Activated naive CD4-positive, alpha-beta T cell treated with anti-CD3 and anti-CD28 coated beads for 36 hours (primary cell): ENCODE measurements at regions of chr4 and their contacts with region 1.

Region 1: GRCh38 chr4:113384600-113384999 is 335.1 kb downstream of the ANK2 start:
- DNase-seq: peak; percentile 18
- H3K4me3 Mint-ChIP-seq: no peak overlapping the region
- H3K27ac Mint-ChIP-seq: peak overlapping the region; percentile 64
- H3K4me1 Mint-ChIP-seq: peaks cover 32% of the 10 kb centered on the region
- H3K27me3 Mint-ChIP-seq: peaks cover 10% of the 10 kb centered on the region

Region 2: DNA sequence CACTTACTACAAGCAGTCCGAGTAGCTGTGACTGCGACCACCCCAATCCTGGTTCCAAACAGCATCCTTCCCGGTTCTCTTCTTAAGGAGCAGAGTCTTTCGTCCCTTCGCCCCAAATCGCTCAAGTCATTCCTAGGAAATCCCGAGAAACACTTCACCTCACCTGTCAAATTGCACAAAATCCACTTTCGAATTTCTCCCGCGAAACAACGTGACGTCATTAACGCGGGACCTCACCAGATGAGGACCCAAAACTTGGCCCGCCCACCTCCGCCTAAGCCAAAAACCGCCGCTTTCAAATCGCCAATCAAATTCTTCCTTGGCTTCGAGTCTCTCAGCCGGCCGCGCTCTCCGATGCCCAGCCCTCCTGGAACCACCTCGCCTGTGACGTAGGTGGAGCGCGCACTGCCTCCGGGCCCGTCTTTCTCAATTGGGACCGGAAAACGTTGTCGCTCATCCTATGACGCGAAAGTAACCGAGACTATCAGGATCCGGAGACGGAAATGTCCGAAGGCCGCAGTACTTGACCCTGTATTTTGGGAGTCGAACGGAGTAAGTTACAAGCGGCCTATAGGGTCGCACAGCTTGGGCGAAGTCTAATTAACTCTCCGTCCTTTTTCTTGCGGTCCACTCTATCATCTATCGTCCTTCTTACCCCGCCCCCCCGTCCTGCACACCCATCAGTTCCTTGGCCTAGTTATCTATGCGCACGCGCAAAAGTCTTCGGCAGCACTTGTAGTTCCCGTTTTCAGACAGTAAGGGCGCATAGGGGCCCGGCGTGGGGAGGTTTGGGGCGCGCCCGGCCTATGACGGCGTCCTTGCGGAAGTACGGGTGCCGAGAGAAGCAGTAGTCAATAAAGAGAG is 747.7 kb before region 1 on chr4 and contains the starts of genes LARP7 and ZGRF1:
- CTCF ChIA-PET with region 1: no interaction called
- intact Hi-C with region 1: loop called (anchors 1 kb)
- DNase-seq: peak; percentile 99
- H3K4me3 Mint-ChIP-seq: no peak within 1 kb of the TSS
- H3K27ac Mint-ChIP-seq: peak within 1 kb of the TSS; percentile 16
- H3K4me1 Mint-ChIP-seq: peaks cover 27% of the 10 kb centered on the region
- H3K27me3 Mint-ChIP-seq: no peaks in the 10 kb centered on the region
- total RNA-seq, gene LARP7: 41.5 to 41.9 TPM
- total RNA-seq, gene ZGRF1: 40.0 to 43.0 TPM

Region 3: GRCh38 chr4:113355550-113356371 is 28.8 kb before region 1 on chr4:
- CTCF ChIA-PET with region 1: interaction called, 4 read pairs
- intact Hi-C with region 1: loop called (anchors 1 kb)
- DNase-seq: peak; percentile 91
- H3K4me3 Mint-ChIP-seq: peak overlapping the region; percentile 59
- H3K27ac Mint-ChIP-seq: peak overlapping the region; percentile 98
- H3K4me1 Mint-ChIP-seq: peaks cover 39% of the 10 kb centered on the region
- H3K27me3 Mint-ChIP-seq: peaks cover 42% of the 10 kb centered on the region

Region 4: DNA sequence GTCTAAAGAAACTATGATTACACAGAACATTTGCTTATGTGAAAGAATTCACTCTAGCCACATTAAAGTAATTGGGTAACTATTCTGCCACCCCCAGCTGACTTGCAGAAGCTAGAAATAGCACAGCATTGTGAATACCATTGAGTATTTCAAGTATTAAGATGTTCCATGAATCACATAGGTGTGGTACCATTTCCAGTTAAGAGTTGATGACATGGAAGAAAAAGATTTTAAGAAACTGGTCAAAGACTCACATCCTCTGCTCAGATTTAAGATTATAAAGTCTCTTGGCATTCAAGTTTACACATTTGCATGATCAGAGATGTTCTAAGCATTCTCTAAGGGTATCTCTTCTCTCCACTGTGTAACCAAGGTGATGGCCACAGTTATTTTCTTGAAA is 89.4 kb after region 1 on chr4:
- CTCF ChIA-PET with region 1: no interaction called
- intact Hi-C with region 1: loop called (anchors 1 kb)
- DNase-seq: peak; percentile 55
- H3K4me3 Mint-ChIP-seq: no peak overlapping the region
- H3K27ac Mint-ChIP-seq: peak overlapping the region; percentile 84
- H3K4me1 Mint-ChIP-seq: peaks cover 56% of the 10 kb centered on the region
- H3K27me3 Mint-ChIP-seq: no peaks in the 10 kb centered on the region

Region 5: DNA sequence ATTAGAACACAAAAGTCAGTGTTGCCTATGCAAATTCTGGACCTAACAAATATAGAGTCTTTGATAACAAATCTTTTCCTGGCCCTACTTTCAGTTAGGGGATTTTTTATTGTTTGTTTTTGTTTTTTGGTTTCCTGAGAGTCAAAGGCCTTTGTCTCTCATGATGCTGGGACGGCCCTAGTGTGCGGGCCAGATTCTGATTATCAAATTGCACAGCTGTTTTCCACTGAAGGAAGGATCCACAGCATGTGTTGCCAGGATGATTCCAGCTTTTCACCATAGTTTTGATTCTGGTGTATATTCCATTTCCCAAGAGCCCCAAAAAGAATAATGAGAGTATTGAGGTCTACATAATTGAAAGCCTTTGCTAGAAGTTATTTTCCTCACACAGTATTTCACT is 128.8 kb after region 1 on chr4:
- CTCF ChIA-PET with region 1: no interaction called
- intact Hi-C with region 1: no loop called
- DNase-seq: no peak
- H3K4me3 Mint-ChIP-seq: no peak overlapping the region
- H3K27ac Mint-ChIP-seq: no peak overlapping the region
- H3K4me1 Mint-ChIP-seq: no peaks in the 10 kb centered on the region
- H3K27me3 Mint-ChIP-seq: no peaks in the 10 kb centered on the region

Region 6: DNA sequence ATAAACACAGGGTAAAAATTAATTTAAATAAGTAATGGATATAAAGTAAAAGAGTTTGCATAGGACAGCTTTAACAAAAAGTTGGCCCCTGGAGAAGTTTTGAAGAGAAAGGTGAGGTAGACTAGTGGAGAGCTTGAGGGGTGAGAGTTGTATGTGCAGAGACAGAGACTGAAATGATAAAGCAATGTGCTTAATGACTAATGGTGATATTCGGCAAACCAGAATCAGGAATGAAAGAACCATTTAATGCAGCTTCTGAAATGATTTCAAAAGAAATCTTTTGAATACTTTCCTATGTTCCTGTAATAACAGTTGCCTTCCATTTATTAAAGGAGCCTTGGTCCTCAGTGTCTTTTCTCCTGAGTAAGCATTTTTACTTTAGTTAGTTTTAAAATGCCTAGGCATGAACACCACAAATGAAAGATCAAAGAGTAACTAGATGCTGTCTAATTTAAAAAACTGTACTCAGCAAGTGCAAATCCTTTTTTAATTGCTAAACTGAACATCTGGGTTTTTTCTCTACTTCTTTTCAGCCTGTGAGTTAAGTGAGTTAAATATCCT is 348.4 kb after region 1 on chr4:
- CTCF ChIA-PET with region 1: no interaction called
- intact Hi-C with region 1: loop called (anchors 1 kb)
- DNase-seq: no peak
- H3K4me3 Mint-ChIP-seq: no peak overlapping the region
- H3K27ac Mint-ChIP-seq: peak overlapping the region; percentile 59
- H3K4me1 Mint-ChIP-seq: peaks cover 73% of the 10 kb centered on the region
- H3K27me3 Mint-ChIP-seq: no peaks in the 10 kb centered on the region

Region 7: DNA sequence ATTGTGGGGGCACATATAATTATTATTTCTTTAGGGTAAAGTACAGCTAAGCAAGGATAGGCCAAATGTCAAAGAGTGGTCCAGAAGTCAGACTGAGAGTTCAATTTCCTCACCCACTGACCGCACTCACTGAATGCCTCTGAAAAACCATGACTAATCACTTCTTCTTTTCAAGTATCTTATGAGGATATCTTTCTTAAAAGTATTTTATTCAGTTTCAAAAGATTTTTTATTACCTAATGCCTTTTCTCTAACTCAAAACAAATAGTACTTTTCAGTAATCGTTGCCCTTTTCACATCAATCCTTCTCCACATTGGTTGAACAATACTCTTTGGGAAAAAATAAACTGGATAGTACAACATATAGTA is 438.7 kb after region 1 on chr4:
- CTCF ChIA-PET with region 1: no interaction called
- intact Hi-C with region 1: loop called (anchors 2 kb)
- DNase-seq: no peak
- H3K4me3 Mint-ChIP-seq: no peak overlapping the region
- H3K27ac Mint-ChIP-seq: no peak overlapping the region
- H3K4me1 Mint-ChIP-seq: peaks cover 66% of the 10 kb centered on the region
- H3K27me3 Mint-ChIP-seq: no peaks in the 10 kb centered on the region

Region 8: DNA sequence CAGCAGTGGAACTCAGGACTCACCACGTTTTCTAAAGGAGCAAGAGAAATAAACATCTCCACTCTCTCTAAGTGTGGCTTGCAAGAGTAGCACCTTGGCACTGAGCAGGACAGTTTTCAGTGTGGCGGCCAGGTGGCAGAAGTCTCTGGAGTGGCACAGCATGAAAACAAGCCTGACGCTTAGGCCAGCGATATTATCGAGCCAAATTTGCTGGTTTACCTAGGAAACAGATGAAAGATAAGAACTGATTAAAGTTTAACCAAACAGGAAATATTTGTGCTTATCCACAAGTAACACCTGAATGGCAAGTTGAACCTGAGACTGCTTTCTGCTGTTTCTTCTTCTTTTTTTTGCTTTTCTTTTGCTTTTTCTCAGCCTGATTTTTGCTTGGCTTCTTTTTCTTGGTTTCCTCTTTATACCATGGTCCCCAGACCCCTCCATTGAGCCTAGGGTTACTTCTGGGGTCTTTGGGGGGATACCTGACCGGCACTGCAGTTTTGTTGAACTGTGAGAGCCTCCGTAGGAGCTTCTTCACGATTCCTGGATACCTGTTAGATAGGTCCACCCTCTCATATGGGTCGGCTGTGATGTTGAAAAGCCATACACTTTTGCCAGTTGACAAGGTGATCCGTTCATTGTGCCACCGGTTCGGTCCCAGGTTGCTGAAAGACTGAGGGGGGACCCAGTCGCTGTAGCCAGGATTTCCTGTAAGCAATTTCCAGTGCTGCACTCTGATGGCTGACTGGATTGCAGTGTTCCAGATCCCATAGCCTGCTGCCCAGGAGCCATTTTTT is 517.6 kb after region 1 on chr4:
- CTCF ChIA-PET with region 1: no interaction called
- intact Hi-C with region 1: loop called (anchors 2 kb)
- DNase-seq: peak; percentile 82
- H3K4me3 Mint-ChIP-seq: peak overlapping the region; percentile 65
- H3K27ac Mint-ChIP-seq: peak overlapping the region; percentile 82
- H3K4me1 Mint-ChIP-seq: peaks cover 58% of the 10 kb centered on the region
- H3K27me3 Mint-ChIP-seq: no peaks in the 10 kb centered on the region